Activated naive CD4-positive, alpha-beta T cell treated with anti-CD3 and anti-CD28 coated beads for 36 hours (primary cell): ENCODE measurements at regions of chr4 and their contacts with region 1.

Region 1: DNA sequence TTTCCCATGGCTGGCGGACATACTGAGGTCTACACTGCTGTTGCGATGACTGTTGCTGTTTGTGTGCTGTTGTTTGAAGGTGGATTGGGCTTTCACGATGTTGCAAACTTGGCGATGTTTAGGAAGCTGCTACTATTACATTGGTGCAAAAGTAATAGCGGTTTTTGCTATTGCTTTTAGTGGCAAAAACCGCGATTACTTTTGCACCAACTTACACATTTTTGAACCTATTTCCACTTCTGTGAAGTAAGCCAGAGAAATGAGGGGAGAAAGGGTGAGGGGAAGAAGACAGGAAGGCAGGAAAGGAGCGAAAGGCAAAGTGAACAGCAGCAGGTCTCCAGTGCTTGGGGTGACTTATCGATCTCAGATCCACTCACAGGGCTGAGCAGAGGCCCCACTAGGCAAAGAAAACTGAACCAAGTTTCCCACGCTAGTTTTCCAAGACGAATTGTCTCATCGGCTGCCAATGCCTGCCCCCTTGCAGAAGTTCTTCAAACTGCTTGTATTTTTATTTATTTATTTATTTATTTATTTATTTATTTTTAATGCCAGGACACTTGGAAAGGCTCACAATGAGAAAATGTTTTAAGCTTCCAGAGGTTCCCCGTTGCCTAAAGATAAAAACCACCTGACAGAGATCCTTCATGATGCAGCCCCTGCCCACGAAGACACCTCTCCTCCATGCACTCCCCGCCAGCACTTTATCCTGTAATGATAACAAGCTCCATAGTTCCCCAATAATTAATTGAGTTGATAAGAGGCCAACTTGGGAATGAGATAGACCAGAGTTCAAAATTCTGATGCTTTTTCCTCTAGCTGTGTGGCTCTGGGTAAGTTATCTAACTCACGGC is 43.3 kb downstream of the QDPR start:
- DNase-seq: no peak
- H3K4me3 Mint-ChIP-seq: no peak overlapping the region
- H3K27ac Mint-ChIP-seq: no peak overlapping the region
- H3K4me1 Mint-ChIP-seq: no peaks in the 10 kb centered on the region
- H3K27me3 Mint-ChIP-seq: no peaks in the 10 kb centered on the region

Region 2: DNA sequence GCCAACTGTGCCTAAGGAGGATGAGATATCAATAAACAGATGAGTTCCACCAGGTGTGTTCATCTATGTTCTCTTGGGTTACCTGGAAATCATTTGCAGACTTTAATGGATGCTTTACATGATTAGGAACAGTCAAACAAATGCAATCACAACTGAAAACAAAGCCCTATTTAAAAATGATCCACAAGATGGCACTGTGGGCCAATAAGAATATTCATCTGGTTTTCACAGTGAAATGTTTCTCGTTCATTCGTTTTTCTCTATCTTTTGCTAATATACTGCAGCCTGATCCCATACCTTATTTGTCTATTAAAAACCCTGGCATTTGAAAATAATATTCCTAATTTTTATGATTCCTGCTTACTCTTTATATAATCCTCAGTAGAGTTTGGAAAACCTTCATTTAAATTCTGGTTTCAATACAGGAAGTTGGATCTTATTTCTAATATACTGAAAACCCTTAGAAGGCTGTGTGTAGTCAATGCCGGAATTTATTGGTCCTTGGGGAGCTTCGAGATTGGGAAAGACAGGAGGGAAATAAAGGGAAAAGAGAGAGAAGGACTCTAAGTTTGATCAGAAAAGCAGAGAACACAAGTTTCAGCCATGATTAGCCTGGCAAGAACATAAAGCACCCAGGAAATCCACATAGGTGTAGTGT is 1178.6 kb before region 1 on chr4:
- CTCF ChIA-PET with region 1: interaction called, 7 read pairs
- intact Hi-C with region 1: loop called (anchors 1 kb)
- DNase-seq: peak; percentile 7
- H3K4me3 Mint-ChIP-seq: no peak overlapping the region
- H3K27ac Mint-ChIP-seq: no peak overlapping the region
- H3K4me1 Mint-ChIP-seq: peaks cover 5% of the 10 kb centered on the region
- H3K27me3 Mint-ChIP-seq: peaks cover 16% of the 10 kb centered on the region

Region 3: GRCh38 chr4:16794816-16795445 is 673.7 kb before region 1 on chr4:
- CTCF ChIA-PET with region 1: no interaction called
- intact Hi-C with region 1: loop called (anchors 2 kb)
- DNase-seq: peak; percentile 67
- H3K4me3 Mint-ChIP-seq: no peak overlapping the region
- H3K27ac Mint-ChIP-seq: no peak overlapping the region
- H3K4me1 Mint-ChIP-seq: no peaks in the 10 kb centered on the region
- H3K27me3 Mint-ChIP-seq: no peaks in the 10 kb centered on the region

Region 4: GRCh38 chr4:17066972-17067371 is 401.6 kb before region 1 on chr4:
- CTCF ChIA-PET with region 1: no interaction called
- intact Hi-C with region 1: no loop called
- DNase-seq: no peak
- H3K4me3 Mint-ChIP-seq: no peak overlapping the region
- H3K27ac Mint-ChIP-seq: no peak overlapping the region
- H3K4me1 Mint-ChIP-seq: no peaks in the 10 kb centered on the region
- H3K27me3 Mint-ChIP-seq: peaks cover under 1% of the 10 kb centered on the region

Region 5: GRCh38 chr4:17168571-17168970 is 300.0 kb before region 1 on chr4:
- CTCF ChIA-PET with region 1: no interaction called
- intact Hi-C with region 1: no loop called
- DNase-seq: no peak
- H3K4me3 Mint-ChIP-seq: no peak overlapping the region
- H3K27ac Mint-ChIP-seq: no peak overlapping the region
- H3K4me1 Mint-ChIP-seq: peaks cover 3% of the 10 kb centered on the region
- H3K27me3 Mint-ChIP-seq: peaks cover 24% of the 10 kb centered on the region

Region 6: GRCh38 chr4:17347445-17347844 is 121.2 kb before region 1 on chr4:
- CTCF ChIA-PET with region 1: interaction called, 15 read pairs
- intact Hi-C with region 1: loop called (anchors 1 kb)
- DNase-seq: peak; percentile 65
- H3K4me3 Mint-ChIP-seq: no peak overlapping the region
- H3K27ac Mint-ChIP-seq: no peak overlapping the region
- H3K4me1 Mint-ChIP-seq: no peaks in the 10 kb centered on the region
- H3K27me3 Mint-ChIP-seq: no peaks in the 10 kb centered on the region